Naive thymus-derived CD4-positive, alpha-beta T cell (primary cell): ENCODE measurements at regions of chr17 and their contacts with region 1.

Region 1: DNA sequence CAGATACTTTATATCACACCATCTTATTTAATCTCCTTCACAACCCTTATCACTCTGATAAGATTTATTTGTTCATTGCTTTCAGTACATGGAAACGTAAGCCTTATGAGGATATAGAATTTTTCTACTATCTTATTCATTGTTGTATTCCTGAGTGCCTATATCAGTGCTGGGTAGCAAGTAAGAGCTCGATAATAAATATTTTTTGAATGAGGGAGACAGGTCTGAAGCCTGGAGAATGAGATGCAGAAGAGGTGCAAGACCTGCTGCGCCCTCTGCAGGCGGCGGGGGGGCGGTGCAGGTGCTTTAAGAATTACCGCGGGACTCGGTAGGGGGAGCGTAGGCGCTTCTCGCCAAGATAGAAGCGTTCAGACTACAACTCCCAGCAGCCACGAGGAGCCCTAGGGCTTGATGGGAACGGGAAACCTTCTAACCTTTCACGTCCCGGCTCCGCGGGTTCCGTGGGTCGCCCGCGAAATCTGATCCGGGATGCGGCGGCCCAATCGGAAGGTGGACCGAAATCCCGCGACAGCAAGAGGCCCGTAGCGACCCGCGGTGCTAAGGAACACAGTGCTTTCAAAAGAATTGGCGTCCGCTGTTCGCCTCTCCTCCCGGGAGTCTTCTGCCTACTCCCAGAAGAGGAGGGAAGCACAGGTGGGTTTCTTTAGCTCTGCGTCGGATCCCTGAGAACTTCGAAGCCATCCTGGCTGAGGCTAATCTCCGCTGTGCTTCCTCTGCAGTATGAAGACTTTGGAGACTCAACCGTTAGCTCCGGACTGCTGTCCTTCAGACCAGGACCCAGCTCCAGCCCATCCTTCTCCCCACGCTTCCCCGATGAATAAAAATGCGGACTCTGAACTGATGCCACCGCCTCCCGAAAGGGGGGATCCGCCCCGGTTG is at the start of gene WRAP53:
- DNase-seq: peak; percentile 93 to 97 (median 96)
- ATAC-seq: peak; percentile 89
- H3K4me3 ChIP-seq: peak within 1 kb of the TSS; percentile 96
- H3K4me3 Mint-ChIP-seq: peak within 1 kb of the TSS; percentile 95 to 99 (median 97)
- H3K27ac ChIP-seq: peak within 1 kb of the TSS; percentile 96
- H3K27ac Mint-ChIP-seq: peak within 1 kb of the TSS; percentile 99 to 100 (median 100)
- H3K4me1 ChIP-seq: peaks cover 28 to 31% of the 10 kb centered on the region in 2 donors
- H3K4me1 Mint-ChIP-seq: peaks cover 31 to 47% (median 41%) of the 10 kb centered on the region in 7 donors
- H3K27me3 ChIP-seq: no peaks in the 10 kb centered on the region
- H3K27me3 Mint-ChIP-seq: no peaks in the 10 kb centered on the region
- total RNA-seq, gene WRAP53: 6.7 to 21.1 (median 9.6) TPM

Region 2: DNA sequence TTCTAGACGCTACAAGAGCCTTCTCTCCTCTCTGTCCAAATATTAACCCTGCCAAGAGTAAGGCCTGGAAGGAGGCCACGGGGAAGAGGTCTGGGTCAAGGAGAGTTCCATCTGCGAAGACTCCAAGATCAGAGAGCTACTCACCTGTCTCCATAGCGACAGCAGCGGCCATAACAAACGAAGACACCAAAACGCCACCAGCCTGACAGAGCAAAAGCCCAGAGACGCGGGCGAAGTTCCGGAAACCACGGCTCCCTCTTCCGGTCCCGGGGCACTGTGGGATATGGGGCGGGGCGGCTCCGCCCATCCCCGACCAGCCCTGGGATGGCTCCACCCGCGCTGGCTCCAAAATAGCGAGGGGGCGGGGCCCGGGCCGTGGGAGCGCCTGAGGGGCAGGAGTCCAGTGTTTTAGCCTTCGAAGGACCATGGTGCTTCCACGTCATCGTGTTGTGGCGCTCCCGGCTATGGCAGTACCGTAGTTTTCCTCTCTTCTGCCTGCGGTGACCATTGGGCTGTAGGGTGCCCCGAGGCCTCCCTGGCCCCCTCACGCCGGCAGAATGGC is 1036.7 kb before region 1 on chr17 and contains the starts of genes C17orf100 and MED31:
- CTCF ChIA-PET with region 1: no interaction called
- POLR2A ChIA-PET with region 1: interaction called, 5 read pairs
- intact Hi-C with region 1: loop called in 1 of 2 experiments (anchors 5 kb)
- DNase-seq: peak; percentile 89 to 97 (median 93)
- ATAC-seq: peak; percentile 96
- H3K4me3 ChIP-seq: peak within 1 kb of the TSS; percentile 99
- H3K4me3 Mint-ChIP-seq: peak within 1 kb of the TSS; percentile 89 to 100 (median 96)
- H3K27ac ChIP-seq: peak within 1 kb of the TSS; percentile 95
- H3K27ac Mint-ChIP-seq: peak within 1 kb of the TSS; percentile 97 to 100 (median 99)
- H3K4me1 ChIP-seq: peaks cover 21 to 26% of the 10 kb centered on the region in 2 donors
- H3K4me1 Mint-ChIP-seq: peaks cover 37 to 87% (median 78%) of the 10 kb centered on the region in 7 donors
- H3K27me3 ChIP-seq: no peaks in the 10 kb centered on the region
- H3K27me3 Mint-ChIP-seq: peaks cover 0 to 29% (median 0%) of the 10 kb centered on the region in 5 donors
- total RNA-seq, gene C17orf100: 1.9 to 6.1 (median 1.9) TPM
- total RNA-seq, gene MED31: 21.4 to 41.2 (median 28.2) TPM

Region 3: DNA sequence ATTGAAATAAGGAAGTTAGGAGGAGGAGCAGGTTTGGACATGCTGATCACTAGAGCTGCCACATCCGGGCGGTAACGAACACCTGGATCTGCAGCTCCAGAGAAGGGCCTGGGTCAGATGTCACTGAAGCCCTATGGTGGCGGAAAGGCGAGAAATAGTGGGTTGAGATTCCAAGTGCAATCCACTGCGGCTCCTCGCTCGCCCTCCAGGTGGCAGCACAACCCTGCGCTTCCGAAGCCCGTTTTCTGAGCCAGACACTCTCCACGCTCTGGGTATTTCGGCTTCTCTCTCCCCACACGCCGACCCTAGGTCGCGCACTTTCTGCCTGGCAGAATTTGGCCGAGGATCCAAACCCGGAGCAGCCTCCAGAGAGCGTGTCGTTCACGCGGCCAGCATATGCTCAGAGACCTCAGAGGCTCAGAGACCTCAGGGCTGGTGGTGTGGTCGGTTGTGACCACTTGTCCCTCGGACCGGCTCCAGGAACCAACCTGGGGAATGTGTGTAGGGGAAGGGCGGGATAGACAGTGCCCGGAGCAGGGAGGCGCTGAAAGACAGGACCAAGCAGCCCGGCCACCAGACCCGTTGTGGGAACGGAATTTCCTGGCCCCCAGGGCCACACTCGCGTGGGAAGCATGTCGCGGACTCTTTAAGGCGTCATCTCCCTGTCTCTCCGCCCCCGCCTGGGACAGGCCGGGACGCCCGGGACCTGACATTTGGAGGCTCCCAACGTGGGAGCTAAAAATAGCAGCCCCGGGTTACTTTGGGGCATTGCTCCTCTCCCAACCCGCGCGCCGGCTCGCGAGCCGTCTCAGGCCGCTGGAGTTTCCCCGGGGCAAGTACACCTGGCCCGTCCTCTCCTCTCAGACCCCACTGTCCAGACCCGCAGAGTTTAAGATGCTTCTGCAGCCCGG is 407.4 kb before region 1 on chr17:
- CTCF ChIA-PET with region 1: interaction called, 5 read pairs
- POLR2A ChIA-PET with region 1: no interaction called
- intact Hi-C with region 1: loop called in 1 of 2 experiments (anchors 1 kb)
- DNase-seq: peak; percentile 76 to 88 (median 85)
- ATAC-seq: peak; percentile 95
- H3K4me3 ChIP-seq: peak overlapping the region; percentile 66
- H3K4me3 Mint-ChIP-seq: peak overlapping the region; percentile 77 to 87 (median 84)
- H3K27ac ChIP-seq: no peak overlapping the region
- H3K27ac Mint-ChIP-seq: peak overlapping the region in 7 of 9 donors; percentile 6 to 88 (median 51)
- H3K4me1 ChIP-seq: peaks cover 11 to 23% of the 10 kb centered on the region in 2 donors
- H3K4me1 Mint-ChIP-seq: peaks cover 14 to 31% (median 21%) of the 10 kb centered on the region in 7 donors
- H3K27me3 ChIP-seq: no peaks in the 10 kb centered on the region
- H3K27me3 Mint-ChIP-seq: peaks cover 6 to 44% (median 17%) of the 10 kb centered on the region in 5 donors

Region 4: DNA sequence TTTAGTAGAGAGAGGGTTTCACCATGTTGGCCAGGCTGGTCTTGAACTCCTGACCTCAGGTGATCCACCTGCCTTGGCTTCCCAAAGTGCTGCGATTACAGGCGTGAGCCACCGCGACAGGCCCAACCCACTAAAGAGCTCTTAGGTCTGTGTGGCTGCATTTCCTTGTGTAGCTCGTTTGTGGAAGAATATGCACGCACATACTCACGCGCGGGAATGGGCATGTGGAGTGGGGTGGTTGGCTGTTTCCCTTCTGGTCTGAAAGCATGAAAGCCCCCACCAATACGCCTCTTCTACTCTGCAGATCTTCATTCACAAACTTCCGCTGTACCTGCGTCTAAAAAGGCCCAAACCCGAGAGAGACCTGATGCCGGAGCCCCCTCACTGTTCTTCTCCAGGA is 233.2 kb before region 1 on chr17:
- CTCF ChIA-PET with region 1: no interaction called
- POLR2A ChIA-PET with region 1: interaction called, 5 read pairs
- intact Hi-C with region 1: loop called (anchors 1 kb)
- DNase-seq: no peak
- ATAC-seq: peak; percentile 26
- H3K4me3 ChIP-seq: peak overlapping the region; percentile 92
- H3K4me3 Mint-ChIP-seq: peak overlapping the region; percentile 89 to 96 (median 95)
- H3K27ac ChIP-seq: peak overlapping the region; percentile 77
- H3K27ac Mint-ChIP-seq: peak overlapping the region; percentile 86 to 97 (median 94)
- H3K4me1 ChIP-seq: peaks cover 17 to 20% of the 10 kb centered on the region in 2 donors
- H3K4me1 Mint-ChIP-seq: peaks cover 13 to 44% (median 36%) of the 10 kb centered on the region in 7 donors
- H3K27me3 ChIP-seq: no peaks in the 10 kb centered on the region
- H3K27me3 Mint-ChIP-seq: no peaks in the 10 kb centered on the region

Region 5: DNA sequence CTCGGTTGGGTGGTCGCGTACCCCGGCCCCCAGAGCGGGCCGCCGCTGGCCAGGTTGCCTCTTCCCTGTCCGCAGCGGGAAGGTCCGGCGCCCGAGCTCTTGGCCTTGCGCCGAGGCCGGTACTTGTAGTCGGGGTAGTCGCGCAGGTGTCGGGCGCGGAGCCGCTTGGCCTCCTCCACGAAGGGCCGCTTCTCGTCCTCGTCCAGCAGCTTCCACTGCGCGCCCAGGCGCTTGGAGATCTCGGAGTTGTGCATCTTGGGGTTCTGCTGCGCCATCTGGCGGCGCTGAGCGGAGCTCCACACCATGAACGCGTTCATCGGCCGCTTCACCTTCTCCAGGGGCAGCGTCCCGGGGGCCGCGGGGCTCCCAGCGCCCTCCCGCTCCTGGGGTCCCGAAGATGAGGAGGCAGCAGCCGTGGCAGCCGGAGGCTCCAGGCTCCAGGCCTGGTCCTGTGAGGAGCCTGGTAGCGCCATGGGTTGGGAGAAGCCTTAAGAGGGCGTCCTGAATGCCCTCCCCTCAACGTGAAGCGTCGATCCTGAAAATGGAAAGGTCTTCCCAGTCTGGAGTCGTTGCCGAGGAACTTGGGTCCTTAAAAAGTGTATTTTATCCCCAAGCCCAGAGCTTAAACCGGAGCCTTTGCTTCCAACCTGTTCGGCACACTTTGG is 98.8 kb before region 1 on chr17:
- CTCF ChIA-PET with region 1: interaction called, 10 read pairs
- POLR2A ChIA-PET with region 1: interaction called, 94 read pairs
- intact Hi-C with region 1: loop called in 1 of 2 experiments (anchors 1 kb)
- DNase-seq: peak; percentile 54 to 72 (median 63)
- ATAC-seq: peak; percentile 87
- H3K4me3 ChIP-seq: no peak overlapping the region
- H3K4me3 Mint-ChIP-seq: no peak overlapping the region
- H3K27ac ChIP-seq: no peak overlapping the region
- H3K27ac Mint-ChIP-seq: peak overlapping the region in 2 of 9 donors; percentile 13 to 38
- H3K4me1 ChIP-seq: peaks cover 8 to 11% of the 10 kb centered on the region in 2 donors
- H3K4me1 Mint-ChIP-seq: peaks cover 9 to 14% (median 13%) of the 10 kb centered on the region in 7 donors
- H3K27me3 ChIP-seq: no peaks in the 10 kb centered on the region
- H3K27me3 Mint-ChIP-seq: no peaks in the 10 kb centered on the region

Region 6: GRCh38 chr17:7673239-7673638 is 14.9 kb before region 1 on chr17:
- CTCF ChIA-PET with region 1: interaction called, 7 read pairs
- POLR2A ChIA-PET with region 1: interaction called, 86 read pairs
- intact Hi-C with region 1: no loop called
- DNase-seq: peak in 5 of 9 donors; percentile 5 to 29 (median 16)
- ATAC-seq: no peak
- H3K4me3 ChIP-seq: no peak overlapping the region
- H3K4me3 Mint-ChIP-seq: no peak overlapping the region
- H3K27ac ChIP-seq: no peak overlapping the region
- H3K27ac Mint-ChIP-seq: peak overlapping the region in 1 of 9 donors; percentile 19
- H3K4me1 ChIP-seq: no peaks in the 10 kb centered on the region
- H3K4me1 Mint-ChIP-seq: peaks cover 4 to 15% (median 8%) of the 10 kb centered on the region in 7 donors
- H3K27me3 ChIP-seq: no peaks in the 10 kb centered on the region
- H3K27me3 Mint-ChIP-seq: no peaks in the 10 kb centered on the region

Region 7: DNA sequence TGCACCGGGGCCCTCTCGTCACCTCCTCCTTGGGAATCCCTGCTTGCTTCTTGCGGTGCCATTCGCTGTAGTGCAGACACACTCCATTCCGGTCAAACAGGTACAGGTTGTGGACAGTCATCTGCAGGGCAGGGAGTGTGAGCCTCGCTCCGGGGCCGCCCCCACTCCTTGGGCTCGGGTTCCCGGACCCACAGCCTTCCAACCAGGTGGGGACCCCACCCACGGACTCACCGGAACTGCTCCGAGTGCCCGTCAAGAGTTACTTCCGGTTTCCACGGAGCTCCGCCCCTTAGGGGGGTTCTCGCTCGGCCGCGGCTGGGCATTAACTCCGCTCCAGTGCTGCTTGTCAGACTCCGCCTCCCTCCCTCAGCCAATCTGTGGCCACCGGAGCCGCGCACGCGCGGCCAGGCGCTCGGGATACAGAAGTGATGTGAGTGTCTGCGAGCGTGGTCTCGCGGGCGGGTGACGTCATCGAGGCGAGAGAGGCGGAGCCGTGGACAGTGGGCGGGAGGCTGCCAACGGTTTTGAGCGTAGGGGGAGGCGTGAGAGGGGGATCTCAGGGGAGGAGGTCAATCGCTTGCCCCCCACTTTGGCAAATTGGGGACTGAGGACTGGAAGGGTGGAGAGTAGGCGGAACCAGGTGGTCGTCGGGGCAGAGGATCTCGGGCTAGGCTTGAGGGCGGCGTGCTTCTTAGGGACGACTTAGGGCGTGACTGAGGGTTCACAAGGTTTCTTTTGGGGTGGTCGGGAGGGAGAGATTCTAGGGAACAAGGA is 243.7 kb after region 1 on chr17 and contains the starts of genes CNTROB and TRAPPC1:
- CTCF ChIA-PET with region 1: no interaction called
- POLR2A ChIA-PET with region 1: interaction called, 3 read pairs
- intact Hi-C with region 1: loop called in 1 of 2 experiments (anchors 10 kb)
- DNase-seq: peak; percentile 97 to 100 (median 99)
- ATAC-seq: peak; percentile 98
- H3K4me3 ChIP-seq: peak within 1 kb of the TSS; percentile 66
- H3K4me3 Mint-ChIP-seq: peak within 1 kb of the TSS; percentile 95 to 100 (median 96)
- H3K27ac ChIP-seq: peak within 1 kb of the TSS; percentile 88
- H3K27ac Mint-ChIP-seq: peak within 1 kb of the TSS; percentile 82 to 99 (median 96)
- H3K4me1 ChIP-seq: peaks cover 20 to 28% of the 10 kb centered on the region in 2 donors
- H3K4me1 Mint-ChIP-seq: peaks cover 31 to 60% (median 54%) of the 10 kb centered on the region in 7 donors
- H3K27me3 ChIP-seq: no peaks in the 10 kb centered on the region
- H3K27me3 Mint-ChIP-seq: no peaks in the 10 kb centered on the region
- total RNA-seq, gene CNTROB: 29.0 to 50.5 (median 33.6) TPM
- total RNA-seq, gene TRAPPC1: 71.4 to 216 (median 103) TPM